Adrenal gland (tissue), 19 donors: ENCODE measurements at regions of chr3 and their contacts with region 1.

Region 1: GRCh38 chr3:139935016-139935865 is at the start of gene CLSTN2:
- DNase-seq: peak; percentile 54 to 83 (median 72)
- H3K4me3 ChIP-seq: peak within 1 kb of the TSS in 2 of 4 donors; percentile 19 to 56
- H3K27ac ChIP-seq: peak within 1 kb of the TSS in 1 of 5 donors; percentile 73
- H3K4me1 ChIP-seq: peaks cover 12 to 20% of the 10 kb centered on the region in 2 donors
- H3K27me3 ChIP-seq: peaks cover 31% of the 10 kb centered on the region
- CTCF ChIP-seq: peak in 2 of 6 experiments; percentile 7 to 31
- POLR2A ChIP-seq: peak; percentile 1 to 49
- total RNA-seq, gene CLSTN2: 0.67 to 17.8 (median 6.0) TPM

Region 2: GRCh38 chr3:140499114-140499757 is 564.0 kb after region 1 on chr3:
- intact Hi-C with region 1: loop called in 1 of 2 experiments (anchors 5 kb)
- DNase-seq: peak in 4 of 7 donors; percentile 16 to 33 (median 30)
- H3K4me3 ChIP-seq: no peak overlapping the region
- H3K27ac ChIP-seq: no peak overlapping the region
- H3K4me1 ChIP-seq: no peaks in the 10 kb centered on the region
- H3K27me3 ChIP-seq: no peaks in the 10 kb centered on the region
- CTCF ChIP-seq: peak; percentile 37 to 65 (median 63)
- POLR2A ChIP-seq: no peak

Region 3: DNA sequence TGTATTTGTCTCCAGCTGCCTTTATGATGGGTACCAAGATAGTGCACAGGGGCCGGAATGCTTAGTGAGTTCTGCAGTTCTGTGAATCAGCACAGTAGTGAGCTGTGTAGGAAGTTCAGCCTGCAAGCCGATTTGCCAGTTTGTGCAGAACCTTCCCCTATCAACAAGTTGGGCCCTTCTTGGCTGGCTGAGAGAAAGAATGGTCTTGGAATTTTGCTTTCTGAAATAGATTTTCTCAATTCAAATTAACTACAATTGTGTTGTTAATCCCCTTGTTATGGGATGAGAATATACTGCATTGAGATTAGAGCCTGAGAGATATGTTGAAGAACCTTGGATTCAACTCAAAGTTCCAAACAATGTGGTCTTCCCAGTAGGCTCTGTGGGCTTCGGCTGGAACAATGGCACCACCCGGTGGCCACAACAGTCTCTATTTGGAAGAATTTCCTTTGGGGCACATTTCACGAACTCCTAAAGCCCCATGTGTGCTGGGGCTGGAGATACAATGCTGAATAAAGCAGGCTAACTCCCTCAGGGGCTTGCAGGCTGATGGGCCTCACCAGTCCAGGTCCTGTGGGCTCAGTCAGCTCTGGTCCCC is 801.7 kb after region 1 on chr3:
- intact Hi-C with region 1: loop called in 1 of 2 experiments (anchors 10 kb)
- DNase-seq: peak; percentile 36 to 81 (median 50)
- H3K4me3 ChIP-seq: no peak overlapping the region
- H3K27ac ChIP-seq: no peak overlapping the region
- H3K4me1 ChIP-seq: no peaks in the 10 kb centered on the region
- H3K27me3 ChIP-seq: no peaks in the 10 kb centered on the region
- CTCF ChIP-seq: peak; percentile 23 to 71 (median 55)
- POLR2A ChIP-seq: no peak